MCF 10A (cell line): ENCODE measurements at regions of chr6 and their contacts with region 1.

Region 1: DNA sequence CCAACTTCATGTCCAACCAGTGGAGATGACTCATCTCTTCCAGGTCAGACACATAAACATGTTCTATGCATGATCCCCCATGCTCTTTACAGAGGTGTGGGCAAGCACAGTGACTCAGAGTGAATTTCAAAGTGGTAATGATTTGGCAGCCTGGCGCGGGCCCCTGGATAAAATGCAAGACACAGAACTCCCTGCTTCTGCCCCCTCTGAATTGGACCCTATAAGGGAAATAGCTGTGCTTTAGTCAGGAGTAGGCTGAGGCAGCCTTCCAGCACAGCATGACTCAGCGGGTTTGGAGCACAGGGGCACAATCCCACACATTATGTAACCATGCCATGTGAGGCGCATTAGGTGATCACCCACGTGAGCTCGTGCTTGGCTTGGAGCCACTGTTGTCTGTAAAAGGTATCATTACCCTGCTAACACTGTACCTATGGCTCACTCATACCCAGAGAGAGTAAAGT is 127.4 kb downstream of the C6orf118 start:
- DNase-seq: peak; percentile 92
- H3K4me3 Mint-ChIP-seq: peak overlapping the region; percentile 55
- H3K27ac Mint-ChIP-seq: peak overlapping the region; percentile 97
- H3K4me1 Mint-ChIP-seq: peaks cover 64% of the 10 kb centered on the region
- H3K27me3 Mint-ChIP-seq: no peaks in the 10 kb centered on the region
- CTCF ChIP-seq: no peak

Region 2: GRCh38 chr6:165060726-165061125 is 121.3 kb before region 1 on chr6:
- CTCF ChIA-PET with region 1: interaction called, 3 read pairs
- POLR2A ChIA-PET with region 1: interaction called, 4 read pairs
- intact Hi-C with region 1: loop called (anchors 5 kb)
- DNase-seq: no peak
- H3K4me3 Mint-ChIP-seq: no peak overlapping the region
- H3K27ac Mint-ChIP-seq: peak overlapping the region; percentile 89
- H3K4me1 Mint-ChIP-seq: peaks cover 27% of the 10 kb centered on the region
- H3K27me3 Mint-ChIP-seq: no peaks in the 10 kb centered on the region
- CTCF ChIP-seq: no peak